ENCODE measurements at regions of chr11 and their contacts with region 1.

Region 1: DNA sequence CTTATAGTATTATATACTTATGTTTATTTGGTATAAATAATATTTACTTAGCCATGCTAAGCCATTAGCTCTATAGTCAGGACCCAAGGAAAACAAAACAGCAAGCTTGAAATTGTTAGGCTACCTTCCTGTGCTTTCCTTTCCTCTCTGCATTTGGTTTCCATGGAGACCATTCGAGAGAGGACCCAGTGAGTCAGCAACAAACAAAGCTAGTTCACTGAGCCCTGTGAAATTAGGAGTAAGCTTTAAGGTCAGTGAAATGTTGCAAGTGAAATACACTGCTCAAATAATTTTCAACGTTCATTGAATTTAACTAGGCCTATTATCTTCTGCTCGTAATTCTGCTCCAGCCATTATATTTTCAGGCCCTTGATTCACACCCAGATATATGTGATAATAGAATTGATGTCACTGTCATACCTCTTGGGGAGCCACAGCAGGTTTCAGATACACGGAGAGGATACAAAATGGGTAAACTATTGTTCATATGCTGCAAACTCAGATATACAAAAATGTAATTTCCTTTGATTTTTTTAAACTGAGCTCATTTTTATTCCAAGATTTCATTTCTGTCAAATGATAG is 9.1 kb upstream of the OR10D3 start:
- DNase-seq: no peak
- ATAC-seq: peak; percentile 93
- H3K4me3 Mint-ChIP-seq: no peak overlapping the region
- H3K27ac Mint-ChIP-seq: no peak overlapping the region
- H3K4me1 Mint-ChIP-seq: peaks cover 9% of the 10 kb centered on the region
- H3K27me3 Mint-ChIP-seq: peaks cover 42% of the 10 kb centered on the region
- CTCF ChIP-seq: no peak

Region 2: DNA sequence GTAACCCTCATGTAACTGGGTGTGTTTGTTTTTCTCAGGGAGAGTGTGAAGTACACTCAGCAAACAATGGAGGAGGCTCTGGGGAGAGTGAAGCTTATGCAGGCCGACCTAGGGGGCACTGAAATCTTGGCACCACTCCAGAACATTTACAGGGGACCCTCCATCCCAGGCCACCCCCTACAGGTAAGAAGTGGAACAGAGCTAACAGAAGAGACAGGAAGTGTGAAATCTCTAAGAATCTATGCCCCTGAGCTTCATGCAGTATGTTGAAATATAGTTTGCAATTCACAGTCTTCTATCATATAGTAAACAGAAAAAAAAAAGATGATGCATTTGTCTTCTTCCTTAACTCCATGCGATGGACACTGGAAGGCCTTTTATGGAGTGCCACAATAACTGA is 50.5 kb before region 1 on chr11:
- CTCF ChIA-PET with region 1: interaction called, 12 read pairs
- POLR2A ChIA-PET with region 1: no interaction called
- DNase-seq: peak; percentile 35
- ATAC-seq: peak; percentile 98
- H3K4me3 Mint-ChIP-seq: no peak overlapping the region
- H3K27ac Mint-ChIP-seq: no peak overlapping the region
- H3K4me1 Mint-ChIP-seq: peaks cover 6% of the 10 kb centered on the region
- H3K27me3 Mint-ChIP-seq: no peaks in the 10 kb centered on the region; the same call in 1 of the 2 replicates
- CTCF ChIP-seq: peak; percentile 31; the same call in 1 of the 2 replicates

Region 3: GRCh38 chr11:124536520-124536919 is 362.4 kb after region 1 on chr11:
- CTCF ChIA-PET with region 1: no interaction called
- POLR2A ChIA-PET with region 1: no interaction called
- DNase-seq: peak; percentile 63
- ATAC-seq: peak; percentile 100
- H3K4me3 Mint-ChIP-seq: no peak overlapping the region
- H3K27ac Mint-ChIP-seq: peak overlapping the region; percentile 64; the same call in 1 of the 2 replicates
- H3K4me1 Mint-ChIP-seq: peaks cover 8% of the 10 kb centered on the region
- H3K27me3 Mint-ChIP-seq: no peaks in the 10 kb centered on the region
- CTCF ChIP-seq: no peak

Measured in WTC11 (cell line).